ENCODE measurements at regions of chr15 and their contacts with region 1.

Region 1: DNA sequence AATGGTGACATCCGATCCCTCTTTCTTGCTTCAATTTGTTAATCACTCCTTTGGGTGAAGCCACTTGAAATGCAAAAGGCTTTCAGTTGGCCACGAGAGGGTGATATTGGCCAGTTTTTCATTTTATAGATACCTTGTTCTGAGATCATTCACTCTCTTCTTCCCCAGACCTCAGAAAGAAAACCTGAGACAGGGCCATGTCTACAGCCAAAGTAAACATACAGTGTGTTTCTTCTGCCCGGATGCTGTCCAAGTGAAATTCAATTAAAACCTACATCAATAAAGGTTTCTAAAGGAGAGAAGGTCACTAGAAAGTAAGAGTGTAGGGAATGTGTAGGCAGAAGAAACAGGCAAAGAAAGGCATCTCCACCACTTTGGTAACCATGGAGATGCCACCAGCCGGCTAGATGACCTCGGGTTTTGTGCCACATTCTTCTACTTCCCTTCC is 39.5 kb upstream of the FMN1 start:
- DNase-seq: peak; percentile 73
- H3K4me3 Mint-ChIP-seq: no peak overlapping the region
- H3K27ac Mint-ChIP-seq: no peak overlapping the region
- H3K4me1 Mint-ChIP-seq: no peaks in the 10 kb centered on the region
- H3K27me3 Mint-ChIP-seq: no peaks in the 10 kb centered on the region
- CTCF ChIP-seq: peak; percentile 63

Region 2: GRCh38 chr15:33559207-33559890 is 325.3 kb after region 1 on chr15:
- CTCF ChIA-PET with region 1: no interaction called
- POLR2A ChIA-PET with region 1: no interaction called
- intact Hi-C with region 1: no loop called
- DNase-seq: no peak
- H3K4me3 Mint-ChIP-seq: no peak overlapping the region
- H3K27ac Mint-ChIP-seq: no peak overlapping the region
- H3K4me1 Mint-ChIP-seq: no peaks in the 10 kb centered on the region
- H3K27me3 Mint-ChIP-seq: peaks cover 82% of the 10 kb centered on the region
- CTCF ChIP-seq: no peak

Region 3: GRCh38 chr15:33675246-33675645 is 441.2 kb after region 1 on chr15:
- CTCF ChIA-PET with region 1: interaction called, 9 read pairs
- POLR2A ChIA-PET with region 1: no interaction called
- intact Hi-C with region 1: loop called (anchors 1 kb)
- DNase-seq: peak; percentile 54
- H3K4me3 Mint-ChIP-seq: no peak overlapping the region
- H3K27ac Mint-ChIP-seq: no peak overlapping the region
- H3K4me1 Mint-ChIP-seq: no peaks in the 10 kb centered on the region
- H3K27me3 Mint-ChIP-seq: peaks cover 77% of the 10 kb centered on the region
- CTCF ChIP-seq: peak; percentile 60

Region 4: GRCh38 chr15:33729653-33730052 is 495.6 kb after region 1 on chr15:
- CTCF ChIA-PET with region 1: interaction called, 54 read pairs
- POLR2A ChIA-PET with region 1: no interaction called
- intact Hi-C with region 1: loop called (anchors 1 kb)
- DNase-seq: peak; percentile 43
- H3K4me3 Mint-ChIP-seq: no peak overlapping the region
- H3K27ac Mint-ChIP-seq: no peak overlapping the region
- H3K4me1 Mint-ChIP-seq: no peaks in the 10 kb centered on the region
- H3K27me3 Mint-ChIP-seq: no peaks in the 10 kb centered on the region
- CTCF ChIP-seq: peak; percentile 39